Heart left ventricle (tissue), 16 donors: ENCODE measurements at regions of chr4 and their contacts with region 1.

Region 1: DNA sequence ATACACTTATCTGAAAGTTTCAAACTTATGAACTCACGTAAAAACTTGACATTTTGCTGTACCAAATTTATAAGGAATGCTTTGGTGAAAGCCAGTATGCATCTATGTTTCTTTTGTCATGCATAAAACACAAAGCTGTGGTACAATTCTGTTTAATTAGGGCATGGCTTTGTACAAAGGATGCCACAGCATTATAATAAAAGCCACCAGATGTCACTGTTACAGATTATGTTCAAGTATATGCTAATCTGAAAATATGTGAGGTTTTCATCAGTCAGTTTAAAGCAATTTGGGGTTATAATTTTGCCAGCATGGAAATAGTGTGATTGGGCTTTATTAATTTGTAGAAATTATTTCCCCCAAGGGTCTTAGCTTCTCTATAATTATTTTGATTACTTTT is 69.0 kb downstream of the ATOH1 start:
- DNase-seq: no peak
- ATAC-seq: no peak
- H3K4me3 ChIP-seq: no peak overlapping the region
- H3K27ac ChIP-seq: no peak overlapping the region
- H3K4me1 ChIP-seq: no peaks in the 10 kb centered on the region
- H3K27me3 ChIP-seq: no peaks in the 10 kb centered on the region
- CTCF ChIP-seq: peak in 6 of 12 donors; percentile 11 to 31 (median 21)
- POLR2A ChIP-seq: no peak

Region 2: GRCh38 chr4:94127707-94128328 is 230.3 kb after region 1 on chr4:
- intact Hi-C with region 1: loop called in 1 of 10 experiments (anchors 5 kb)
- DNase-seq: no peak
- ATAC-seq: no peak
- H3K4me3 ChIP-seq: no peak overlapping the region
- H3K27ac ChIP-seq: no peak overlapping the region
- H3K4me1 ChIP-seq: no peaks in the 10 kb centered on the region
- H3K27me3 ChIP-seq: no peaks in the 10 kb centered on the region
- CTCF ChIP-seq: peak in 11 of 12 donors; percentile 32 to 66 (median 49)
- POLR2A ChIP-seq: no peak

Region 3: GRCh38 chr4:94256828-94257227 is 359.3 kb after region 1 on chr4:
- intact Hi-C with region 1: loop called in 1 of 10 experiments (anchors 10 kb)
- DNase-seq: no peak
- ATAC-seq: no peak
- H3K4me3 ChIP-seq: no peak overlapping the region
- H3K27ac ChIP-seq: no peak overlapping the region
- H3K4me1 ChIP-seq: no peaks in the 10 kb centered on the region
- H3K27me3 ChIP-seq: no peaks in the 10 kb centered on the region
- CTCF ChIP-seq: peak in 7 of 12 donors; percentile 15 to 37 (median 25)
- POLR2A ChIP-seq: no peak